Thyroid gland (tissue), 4 donors: ENCODE measurements at regions of chr7 and their contacts with region 1.

Region 1: DNA sequence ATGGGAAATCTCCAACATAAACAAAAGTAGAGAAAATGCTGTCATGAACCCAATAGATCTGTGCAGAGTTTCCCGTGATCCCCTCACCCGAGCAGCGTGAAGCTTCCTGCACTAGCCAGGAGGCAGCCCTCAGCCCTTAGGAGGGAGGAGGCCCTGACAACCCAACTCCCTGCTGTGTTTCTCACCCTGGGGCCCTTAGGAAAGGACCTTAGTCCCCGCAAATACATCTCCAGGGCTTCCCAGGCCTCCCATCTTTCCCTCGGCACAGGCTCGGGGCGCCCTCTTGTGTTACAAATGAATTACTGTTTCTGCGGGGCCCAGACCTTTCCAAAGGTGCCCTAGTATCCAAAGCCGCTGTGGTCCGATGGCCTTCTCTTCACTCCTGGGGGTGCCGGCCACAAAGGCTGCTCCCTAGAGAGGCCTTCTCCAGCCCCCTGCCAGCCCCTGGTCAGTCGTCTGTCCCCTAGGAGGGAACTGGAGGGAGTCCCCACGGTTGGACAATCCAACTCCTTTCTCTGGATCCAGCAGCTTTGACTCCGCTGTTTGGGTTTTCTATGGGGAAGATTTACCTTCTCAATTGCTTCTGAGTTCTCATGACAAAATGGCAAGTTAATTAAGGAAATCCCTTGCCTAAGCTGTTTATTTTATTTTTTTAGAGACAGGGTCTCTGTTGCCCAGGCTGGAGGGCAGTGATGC is 49.9 kb upstream of the SH2B2 start:
- DNase-seq: peak; percentile 50 to 62
- H3K4me3 ChIP-seq: no peak overlapping the region
- H3K27ac ChIP-seq: no peak overlapping the region
- H3K4me1 ChIP-seq: no peaks in the 10 kb centered on the region
- H3K27me3 ChIP-seq: no peaks in the 10 kb centered on the region
- CTCF ChIP-seq: peak; percentile 51 to 82 (median 70)
- POLR2A ChIP-seq: no peak

Region 2: DNA sequence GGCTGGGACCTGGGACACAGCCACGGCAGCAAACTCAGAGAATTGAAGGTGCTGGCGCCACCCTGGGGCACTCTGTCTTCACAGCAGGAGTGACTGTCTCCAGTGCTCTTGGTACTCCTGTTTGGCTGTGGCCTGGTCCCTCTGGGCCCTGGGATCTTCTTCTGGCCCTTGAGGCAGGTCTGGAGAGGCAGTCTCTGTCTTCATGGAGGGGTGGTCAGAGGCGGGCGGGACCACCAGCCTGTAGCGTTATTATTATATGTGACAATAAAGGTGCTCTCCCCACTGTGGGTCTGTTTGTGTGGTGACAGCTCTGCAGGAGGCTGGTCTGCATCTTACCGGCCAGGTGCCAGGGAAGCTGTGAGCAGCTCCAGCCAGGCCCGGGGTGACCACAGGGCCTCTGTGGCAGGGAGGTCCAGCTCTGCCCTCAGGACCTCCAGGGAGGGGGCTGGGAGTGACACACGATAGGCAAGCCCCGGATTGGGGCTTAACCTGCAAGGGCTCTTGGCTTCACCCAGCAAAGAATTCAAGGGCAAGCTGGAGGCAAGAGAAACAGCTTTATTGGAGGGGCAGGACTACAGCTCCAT is 677.9 kb before region 1 on chr7:
- intact Hi-C with region 1: no loop called
- DNase-seq: no peak
- H3K4me3 ChIP-seq: no peak overlapping the region
- H3K27ac ChIP-seq: no peak overlapping the region
- H3K4me1 ChIP-seq: no peaks in the 10 kb centered on the region
- H3K27me3 ChIP-seq: no peaks in the 10 kb centered on the region
- CTCF ChIP-seq: no peak
- POLR2A ChIP-seq: no peak

Region 3: DNA sequence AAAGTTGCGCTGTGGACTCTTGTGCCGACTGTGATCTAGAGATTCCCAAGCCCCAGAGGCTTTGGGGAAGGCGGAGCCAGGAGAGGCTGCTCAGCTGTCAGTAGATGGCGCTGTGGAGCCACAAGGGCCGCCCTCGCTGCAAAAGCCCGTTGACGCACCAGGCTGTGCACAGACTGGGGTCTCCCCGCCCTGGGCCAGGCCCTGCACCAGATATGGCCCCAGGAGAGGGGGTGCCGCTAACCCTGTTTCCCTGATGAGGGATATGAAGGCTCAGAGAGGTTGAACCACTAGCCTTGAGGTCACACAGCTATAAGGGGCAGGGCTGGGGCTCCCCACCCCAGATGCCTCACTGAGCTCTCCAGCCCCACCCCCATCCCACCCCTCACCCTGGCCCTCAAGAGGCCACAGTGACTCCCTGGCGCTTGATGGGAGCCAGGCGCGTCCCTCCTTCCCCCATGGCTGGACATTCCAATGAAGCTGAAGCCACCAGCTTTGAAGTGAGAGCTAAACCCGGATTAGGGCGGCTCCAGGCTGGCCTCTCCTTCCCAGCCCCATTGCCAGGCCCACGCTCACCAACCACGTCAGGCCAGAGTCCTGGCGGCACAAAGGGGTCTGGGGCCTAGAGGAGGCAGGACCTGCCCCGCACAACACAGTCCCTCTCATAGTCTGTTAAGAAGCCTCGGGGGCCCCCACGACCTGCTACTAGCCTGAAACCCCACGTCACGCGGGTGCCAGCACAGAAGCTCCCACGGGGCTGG is 634.1 kb before region 1 on chr7:
- intact Hi-C with region 1: loop called (anchors 5 kb)
- DNase-seq: peak; percentile 75 to 77
- H3K4me3 ChIP-seq: no peak overlapping the region
- H3K27ac ChIP-seq: no peak overlapping the region
- H3K4me1 ChIP-seq: peaks cover 13 to 23% of the 10 kb centered on the region in 2 donors
- H3K27me3 ChIP-seq: no peaks in the 10 kb centered on the region
- CTCF ChIP-seq: peak; percentile 58 to 92 (median 81)
- POLR2A ChIP-seq: no peak

Region 4: GRCh38 chr7:101688183-101688831 is 548.4 kb before region 1 on chr7:
- intact Hi-C with region 1: loop called (anchors 5 kb)
- DNase-seq: peak; percentile 76 to 79
- H3K4me3 ChIP-seq: peak overlapping the region in 1 of 3 donors; percentile 6
- H3K27ac ChIP-seq: no peak overlapping the region
- H3K4me1 ChIP-seq: peaks cover 0 to 22% of the 10 kb centered on the region in 2 donors
- H3K27me3 ChIP-seq: no peaks in the 10 kb centered on the region
- CTCF ChIP-seq: peak; percentile 68 to 99 (median 91)
- POLR2A ChIP-seq: no peak

Region 5: GRCh38 chr7:101717628-101718357 is 518.9 kb before region 1 on chr7:
- intact Hi-C with region 1: no loop called
- DNase-seq: no peak
- H3K4me3 ChIP-seq: no peak overlapping the region
- H3K27ac ChIP-seq: no peak overlapping the region
- H3K4me1 ChIP-seq: no peaks in the 10 kb centered on the region
- H3K27me3 ChIP-seq: no peaks in the 10 kb centered on the region
- CTCF ChIP-seq: no peak
- POLR2A ChIP-seq: no peak

Region 6: GRCh38 chr7:102175423-102176170 is 61.1 kb before region 1 on chr7:
- intact Hi-C with region 1: no loop called
- DNase-seq: no peak
- H3K4me3 ChIP-seq: no peak overlapping the region
- H3K27ac ChIP-seq: no peak overlapping the region
- H3K4me1 ChIP-seq: no peaks in the 10 kb centered on the region
- H3K27me3 ChIP-seq: no peaks in the 10 kb centered on the region
- CTCF ChIP-seq: no peak
- POLR2A ChIP-seq: no peak